Common myeloid progenitor, CD34-positive (primary cell): ENCODE measurements at regions of chr18 and their contacts with region 1.

Region 1: DNA sequence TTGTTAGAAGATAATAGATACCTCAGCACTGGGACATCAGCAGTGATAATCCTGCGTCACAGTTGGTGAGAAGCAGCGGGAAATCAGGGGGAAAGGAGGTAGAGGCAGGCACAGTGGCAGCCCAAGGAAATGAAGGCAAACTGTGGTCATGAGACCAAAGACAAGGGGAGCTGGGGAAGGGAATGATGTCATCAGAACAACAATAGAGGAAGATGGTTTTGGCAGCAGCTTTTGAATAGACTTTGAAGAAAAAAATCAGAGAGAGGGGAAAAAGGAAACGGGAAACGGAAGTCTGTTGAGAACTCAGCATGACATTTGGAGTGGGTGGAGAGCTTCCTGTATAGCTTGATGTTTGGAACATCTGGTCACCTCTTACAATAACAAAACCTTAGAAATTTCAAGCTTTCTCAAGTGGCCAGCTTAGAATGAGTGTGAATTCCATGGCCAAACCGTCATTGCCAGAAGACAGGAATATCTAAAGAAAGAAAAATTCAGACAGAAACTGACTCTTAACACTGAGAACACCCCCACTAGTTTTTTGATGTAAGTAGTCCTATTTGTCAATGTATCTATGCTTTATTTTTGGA is 18.4 kb upstream of the YES1 start:
- DNase-seq: peak; percentile 83 to 93 (median 91)
- H3K4me3 ChIP-seq: peak overlapping the region in 1 of 7 experiments; percentile 46
- H3K27ac ChIP-seq: peak overlapping the region in 1 of 2 experiments; percentile 32
- H3K4me1 ChIP-seq: peaks cover 8 to 14% (median 13%) of the 10 kb centered on the region in 4 experiments
- H3K27me3 ChIP-seq: no peaks in the 10 kb centered on the region

Region 2: DNA sequence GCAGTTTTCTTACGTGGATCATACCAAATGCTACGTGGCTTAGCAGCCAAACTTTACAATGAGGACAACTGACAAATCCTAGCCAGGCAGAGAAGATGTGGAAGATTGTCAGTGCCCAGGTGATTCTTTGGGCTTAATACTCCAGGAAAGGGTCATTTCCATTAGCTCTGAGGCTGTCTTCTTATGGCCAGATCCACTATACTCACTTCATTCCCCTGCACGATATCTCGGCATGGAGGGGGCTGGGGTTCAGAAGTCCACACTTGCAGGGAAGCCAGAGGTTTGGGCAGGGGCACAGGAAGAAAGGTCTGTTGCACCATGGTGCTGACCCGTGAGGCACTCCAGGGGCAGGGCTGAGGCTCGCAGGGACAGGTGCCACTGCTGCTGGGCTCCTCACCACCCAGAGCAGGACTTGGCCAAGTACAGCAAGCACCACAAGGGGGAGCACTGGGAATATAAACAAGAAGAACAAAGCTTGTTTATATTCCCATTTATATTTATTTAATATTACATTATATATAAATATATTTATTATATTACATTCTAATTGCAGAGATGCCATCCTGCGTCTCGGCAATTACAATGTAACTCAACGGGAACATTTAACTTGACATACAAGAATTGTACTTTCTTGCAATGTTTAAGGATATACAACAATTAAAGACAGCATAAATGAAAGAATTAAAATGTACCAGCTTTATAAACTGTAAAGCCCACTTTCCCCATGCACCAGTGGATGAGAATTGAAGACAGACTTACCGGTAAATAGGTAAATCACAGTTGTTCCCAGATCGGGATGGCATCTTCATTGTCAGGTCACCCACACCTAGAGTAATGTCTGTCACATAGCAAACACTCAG is 206.4 kb before region 1 on chr18:
- CTCF ChIA-PET with region 1: interaction called, 60 read pairs
- POLR2A ChIA-PET with region 1: no interaction called
- DNase-seq: peak; percentile 77 to 85 (median 77)
- H3K4me3 ChIP-seq: no peak overlapping the region
- H3K27ac ChIP-seq: no peak overlapping the region
- H3K4me1 ChIP-seq: peaks cover 0 to 2% (median 0%) of the 10 kb centered on the region in 4 experiments
- H3K27me3 ChIP-seq: no peaks in the 10 kb centered on the region

Region 3: GRCh38 chr18:741931-742512 is 88.4 kb before region 1 on chr18:
- CTCF ChIA-PET with region 1: interaction called, 179 read pairs
- POLR2A ChIA-PET with region 1: interaction called, 7 read pairs
- DNase-seq: peak; percentile 59 to 82 (median 79)
- H3K4me3 ChIP-seq: no peak overlapping the region
- H3K27ac ChIP-seq: no peak overlapping the region
- H3K4me1 ChIP-seq: no peaks in the 10 kb centered on the region
- H3K27me3 ChIP-seq: no peaks in the 10 kb centered on the region

Region 4: GRCh38 chr18:765764-766549 is 64.5 kb before region 1 on chr18:
- CTCF ChIA-PET with region 1: interaction called, 13 read pairs
- POLR2A ChIA-PET with region 1: no interaction called
- DNase-seq: no peak
- H3K4me3 ChIP-seq: no peak overlapping the region
- H3K27ac ChIP-seq: no peak overlapping the region
- H3K4me1 ChIP-seq: peaks cover 0 to 7% (median 0%) of the 10 kb centered on the region in 4 experiments
- H3K27me3 ChIP-seq: no peaks in the 10 kb centered on the region

Region 5: GRCh38 chr18:812376-813171 is 17.8 kb before region 1 on chr18:
- CTCF ChIA-PET with region 1: interaction called, 55 read pairs
- POLR2A ChIA-PET with region 1: interaction called, 11 read pairs
- DNase-seq: peak; percentile 91 to 95 (median 94)
- H3K4me3 ChIP-seq: peak overlapping the region; percentile 85 to 97 (median 92)
- H3K27ac ChIP-seq: peak overlapping the region; percentile 73 to 93
- H3K4me1 ChIP-seq: peaks cover 15 to 71% (median 40%) of the 10 kb centered on the region in 4 experiments
- H3K27me3 ChIP-seq: no peaks in the 10 kb centered on the region

Region 6: GRCh38 chr18:887716-888115 is 57.3 kb after region 1 on chr18:
- CTCF ChIA-PET with region 1: no interaction called
- POLR2A ChIA-PET with region 1: no interaction called
- DNase-seq: no peak
- H3K4me3 ChIP-seq: no peak overlapping the region
- H3K27ac ChIP-seq: no peak overlapping the region
- H3K4me1 ChIP-seq: no peaks in the 10 kb centered on the region
- H3K27me3 ChIP-seq: peaks cover 0 to 4% (median 0%) of the 10 kb centered on the region in 5 experiments